MCF 10A (cell line): ENCODE measurements at regions of chr12 and their contacts with region 1.

Region 1: GRCh38 chr12:98593351-98594049 is at the start of gene SLC25A3:
- DNase-seq: peak; percentile 98
- H3K4me3 Mint-ChIP-seq: peak within 1 kb of the TSS; percentile 98
- H3K27ac Mint-ChIP-seq: peak within 1 kb of the TSS; percentile 100
- H3K4me1 Mint-ChIP-seq: peaks cover 6% of the 10 kb centered on the region
- H3K27me3 Mint-ChIP-seq: no peaks in the 10 kb centered on the region
- CTCF ChIP-seq: no peak
- total RNA-seq, gene SLC25A3: 603 and 694 TPM in 2 replicates

Region 2: DNA sequence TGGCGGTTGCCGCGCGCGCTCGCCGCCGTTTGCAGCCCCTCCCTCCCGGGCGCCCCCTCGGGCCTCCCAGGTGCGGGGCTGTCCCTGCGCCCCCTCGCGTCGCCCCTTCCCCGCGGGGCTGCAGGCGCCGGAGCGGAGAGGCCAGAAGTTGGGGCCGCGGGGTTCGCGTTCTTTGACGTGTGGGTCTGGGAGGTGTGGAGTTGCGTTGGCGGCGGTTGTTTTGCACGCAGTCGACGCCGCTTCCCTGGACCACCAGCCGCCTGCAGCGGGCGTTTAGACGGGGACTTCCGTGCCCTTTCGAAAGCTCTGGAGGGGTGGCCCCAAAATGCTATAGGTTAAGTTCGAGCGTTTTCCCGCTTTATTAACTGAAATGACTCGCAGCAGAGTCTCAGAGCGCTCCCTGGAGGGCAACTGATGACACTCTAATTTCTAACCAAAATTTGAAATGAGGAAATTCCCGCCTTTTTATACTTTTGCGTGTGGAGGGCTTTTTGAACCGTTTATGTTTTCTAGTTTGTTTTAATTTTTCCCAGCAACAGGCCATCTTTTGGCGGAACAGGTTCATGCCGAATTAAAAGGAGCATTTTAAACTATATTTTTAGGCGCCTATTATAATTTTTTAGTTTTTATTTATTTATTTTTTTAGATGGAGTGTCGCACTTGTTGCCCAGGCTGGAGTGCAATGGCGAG is 77.2 kb before region 1 on chr12:
- CTCF ChIA-PET with region 1: interaction called, 3 read pairs
- POLR2A ChIA-PET with region 1: interaction called, 45 read pairs
- intact Hi-C with region 1: no loop called
- DNase-seq: peak; percentile 93
- H3K4me3 Mint-ChIP-seq: peak overlapping the region; percentile 96
- H3K27ac Mint-ChIP-seq: peak overlapping the region; percentile 61
- H3K4me1 Mint-ChIP-seq: peaks cover 20% of the 10 kb centered on the region
- H3K27me3 Mint-ChIP-seq: no peaks in the 10 kb centered on the region
- CTCF ChIP-seq: peak; percentile 78

Region 3: GRCh38 chr12:98578821-98579220 is 14.7 kb before region 1 on chr12:
- CTCF ChIA-PET with region 1: interaction called, 3 read pairs
- POLR2A ChIA-PET with region 1: interaction called, 21 read pairs
- intact Hi-C with region 1: no loop called
- DNase-seq: peak; percentile 34
- H3K4me3 Mint-ChIP-seq: no peak overlapping the region
- H3K27ac Mint-ChIP-seq: no peak overlapping the region
- H3K4me1 Mint-ChIP-seq: peaks cover 9% of the 10 kb centered on the region
- H3K27me3 Mint-ChIP-seq: no peaks in the 10 kb centered on the region
- CTCF ChIP-seq: no peak

Region 4: GRCh38 chr12:98612696-98613334 is 19.3 kb after region 1 on chr12:
- CTCF ChIA-PET with region 1: interaction called, 18 read pairs
- POLR2A ChIA-PET with region 1: interaction called, 37 read pairs
- intact Hi-C with region 1: no loop called
- DNase-seq: no peak
- H3K4me3 Mint-ChIP-seq: no peak overlapping the region
- H3K27ac Mint-ChIP-seq: no peak overlapping the region
- H3K4me1 Mint-ChIP-seq: no peaks in the 10 kb centered on the region
- H3K27me3 Mint-ChIP-seq: no peaks in the 10 kb centered on the region
- CTCF ChIP-seq: no peak

Region 5: DNA sequence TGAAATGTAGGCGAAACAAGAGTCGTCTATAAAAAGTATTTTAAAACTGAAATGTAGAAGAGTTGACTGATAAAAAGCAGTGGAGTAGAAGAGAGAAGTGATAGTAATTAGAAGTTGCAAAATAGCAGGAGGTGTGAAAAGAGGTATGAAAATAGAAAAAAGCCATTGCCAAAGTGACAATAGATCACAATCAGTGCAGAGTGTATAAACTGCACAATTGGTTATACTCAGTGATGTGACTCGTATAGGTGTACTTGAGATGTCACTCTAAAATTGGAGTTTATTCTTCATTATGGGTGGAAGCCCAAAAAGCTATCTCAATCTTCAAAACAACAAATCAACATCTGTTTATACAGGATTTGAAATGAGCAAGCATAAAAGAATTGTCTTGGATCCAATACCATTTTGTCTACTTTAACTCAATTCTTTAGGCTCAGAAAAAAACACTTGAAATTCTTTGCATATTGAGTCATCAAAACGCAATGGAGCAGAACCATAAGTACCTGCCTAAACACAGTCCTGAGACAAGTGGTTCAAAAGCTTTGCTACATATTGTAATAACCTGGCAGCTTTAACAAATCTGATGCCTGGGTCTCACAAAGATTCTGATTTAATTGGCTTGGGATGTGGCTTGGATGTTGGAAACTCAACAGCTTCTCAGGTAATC is 42.3 kb after region 1 on chr12:
- CTCF ChIA-PET with region 1: interaction called, 4 read pairs
- POLR2A ChIA-PET with region 1: interaction called, 255 read pairs
- intact Hi-C with region 1: no loop called
- DNase-seq: peak; percentile 78
- H3K4me3 Mint-ChIP-seq: peak overlapping the region; percentile 12
- H3K27ac Mint-ChIP-seq: peak overlapping the region; percentile 54
- H3K4me1 Mint-ChIP-seq: peaks cover 13% of the 10 kb centered on the region
- H3K27me3 Mint-ChIP-seq: no peaks in the 10 kb centered on the region
- CTCF ChIP-seq: no peak

Region 6: DNA sequence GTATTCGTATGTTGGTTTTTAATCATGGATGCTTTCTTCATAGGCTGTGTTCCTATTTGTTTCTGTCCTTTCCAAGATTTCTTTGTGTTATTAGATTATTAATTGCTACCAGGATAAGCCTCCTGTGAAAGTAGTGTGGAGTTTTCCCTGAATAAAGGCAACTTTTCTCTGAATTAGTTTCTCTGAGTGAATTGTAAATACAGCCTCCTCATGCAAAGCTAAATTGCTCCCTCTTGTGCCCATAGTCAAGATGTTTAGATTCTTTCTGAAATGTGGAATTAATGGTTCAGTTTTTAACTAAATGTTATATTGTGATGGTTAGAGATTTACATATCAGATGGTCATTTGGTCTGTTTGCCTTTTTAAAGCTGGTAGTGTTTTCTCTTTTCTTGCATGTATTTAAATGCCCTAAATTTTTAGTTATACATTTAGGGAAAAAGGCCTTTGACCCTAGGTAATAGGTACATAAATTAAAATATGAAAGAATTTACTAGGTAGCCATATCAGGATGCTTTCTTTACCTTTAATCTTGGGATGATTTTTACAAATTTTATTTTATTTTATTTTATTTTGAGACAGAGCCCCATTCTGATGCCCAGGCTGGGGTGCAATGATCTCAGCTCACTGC is 60.5 kb after region 1 on chr12:
- CTCF ChIA-PET with region 1: interaction called, 11 read pairs
- POLR2A ChIA-PET with region 1: interaction called, 255 read pairs
- intact Hi-C with region 1: no loop called
- DNase-seq: peak; percentile 73
- H3K4me3 Mint-ChIP-seq: no peak overlapping the region
- H3K27ac Mint-ChIP-seq: no peak overlapping the region
- H3K4me1 Mint-ChIP-seq: peaks cover 8% of the 10 kb centered on the region
- H3K27me3 Mint-ChIP-seq: no peaks in the 10 kb centered on the region
- CTCF ChIP-seq: peak; percentile 79

Region 7: GRCh38 chr12:98736352-98737321 is 143.1 kb after region 1 on chr12:
- CTCF ChIA-PET with region 1: no interaction called
- POLR2A ChIA-PET with region 1: no interaction called
- intact Hi-C with region 1: no loop called
- DNase-seq: no peak
- H3K4me3 Mint-ChIP-seq: no peak overlapping the region
- H3K27ac Mint-ChIP-seq: no peak overlapping the region
- H3K4me1 Mint-ChIP-seq: peaks cover 5% of the 10 kb centered on the region
- H3K27me3 Mint-ChIP-seq: no peaks in the 10 kb centered on the region
- CTCF ChIP-seq: no peak

Region 8: DNA sequence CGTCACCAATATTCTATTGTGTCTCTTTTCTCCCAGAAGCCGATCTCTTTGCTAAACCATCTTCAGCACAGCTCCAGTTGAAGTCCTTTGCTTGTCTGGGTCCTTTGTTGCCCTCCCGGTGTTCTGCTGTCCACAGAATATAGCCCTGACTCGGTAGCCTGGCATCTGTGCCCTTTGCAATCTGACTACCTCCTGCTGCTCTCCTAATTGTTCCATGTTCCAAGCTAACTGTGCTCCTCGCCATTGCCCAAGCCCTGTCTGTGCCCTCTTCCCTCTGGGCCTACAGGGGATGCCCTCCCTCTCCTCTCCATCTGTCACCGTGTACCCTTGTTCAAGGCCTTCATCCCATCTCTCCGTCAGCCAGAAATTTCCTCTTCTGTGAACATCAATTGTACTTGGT is 357.9 kb after region 1 on chr12:
- CTCF ChIA-PET with region 1: no interaction called
- POLR2A ChIA-PET with region 1: no interaction called
- intact Hi-C with region 1: no loop called
- DNase-seq: no peak
- H3K4me3 Mint-ChIP-seq: no peak overlapping the region
- H3K27ac Mint-ChIP-seq: no peak overlapping the region
- H3K4me1 Mint-ChIP-seq: no peaks in the 10 kb centered on the region
- H3K27me3 Mint-ChIP-seq: no peaks in the 10 kb centered on the region
- CTCF ChIP-seq: no peak